ENCODE measurements at regions of chr17 and their contacts with region 1.

Region 1: GRCh38 chr17:78034429-78035091 is 76.1 kb downstream of the TNRC6C start:
- DNase-seq: no peak

Region 2: DNA sequence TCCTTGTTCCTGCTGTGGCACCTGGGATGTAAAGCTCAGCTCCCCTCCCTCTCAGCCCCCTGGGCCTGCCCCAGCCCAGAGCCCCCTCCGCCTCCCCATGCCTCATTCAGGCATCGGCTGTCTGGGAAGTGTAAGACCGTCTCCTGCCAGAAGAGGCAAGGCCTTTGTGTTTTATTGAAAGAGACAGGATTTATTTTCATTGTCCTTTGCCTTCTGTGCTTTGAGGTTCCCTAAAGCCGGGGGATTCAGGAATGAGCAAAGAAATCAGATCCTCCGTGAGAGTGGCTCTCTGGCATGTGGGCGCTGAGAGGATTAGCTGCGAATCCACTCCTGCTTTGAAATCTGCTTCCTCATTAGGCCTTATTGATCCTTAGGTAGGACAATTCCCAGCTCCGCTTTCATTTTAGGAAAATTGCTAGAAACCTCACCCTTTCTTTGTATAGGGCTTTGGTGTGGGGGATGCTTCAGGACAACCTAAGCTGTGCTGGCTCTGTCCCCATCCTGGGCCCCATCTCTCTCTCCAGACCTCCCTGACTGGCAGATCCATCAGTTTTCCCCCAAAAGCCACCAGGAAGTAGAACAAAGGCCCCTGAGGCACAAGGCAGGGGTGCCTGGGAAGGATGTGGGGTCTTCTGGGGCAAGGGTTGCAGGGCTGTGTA is 287.5 kb before region 1 on chr17:
- intact Hi-C with region 1: no loop called
- DNase-seq: peak; percentile 50

Region 3: DNA sequence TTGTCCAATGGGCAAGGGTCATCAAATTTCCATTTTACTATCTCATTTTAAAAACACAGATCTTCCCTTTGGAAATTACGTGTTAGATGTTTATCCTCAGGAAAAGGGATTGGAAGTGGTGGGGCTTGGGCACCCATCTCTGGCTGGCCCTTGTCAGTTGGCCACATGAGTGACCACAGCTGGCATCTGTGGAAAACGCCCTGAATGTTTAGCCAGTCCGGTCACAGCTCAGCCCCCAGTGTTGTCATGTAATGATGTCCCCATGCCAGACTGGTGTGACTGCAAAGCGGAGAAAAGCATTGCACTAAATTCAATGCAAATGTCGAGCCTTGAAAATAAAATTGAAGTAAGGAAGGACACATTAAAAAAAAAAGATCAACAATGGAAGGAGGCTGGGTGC is 41.0 kb after region 1 on chr17:
- intact Hi-C with region 1: loop called (anchors 5 kb)
- DNase-seq: no peak